ENCODE measurements at regions of chr10 and their contacts with region 1.

Region 1: GRCh38 chr10:11145495-11145855 is 127.8 kb downstream of the CELF2 start:
- DNase-seq: peak in 34 of 35 experiments; percentile 54 to 86 (median 72)
- ATAC-seq: peak; percentile 74 to 86 (median 82)
- H3K4me3 ChIP-seq: peak overlapping the region in 1 of 2 donors; percentile 54
- H3K4me3 Mint-ChIP-seq: peak overlapping the region; percentile 59 to 75 (median 71)
- H3K27ac ChIP-seq: peak overlapping the region; percentile 96
- H3K27ac Mint-ChIP-seq: peak overlapping the region; percentile 96 to 98
- H3K4me1 ChIP-seq: peaks cover 91 to 93% of the 10 kb centered on the region in 2 experiments
- H3K4me1 Mint-ChIP-seq: peaks cover 98 to 100% (median 98%) of the 10 kb centered on the region in 3 donors
- H3K27me3 ChIP-seq: no peaks in the 10 kb centered on the region
- H3K27me3 Mint-ChIP-seq: no peaks in the 10 kb centered on the region

Region 2: DNA sequence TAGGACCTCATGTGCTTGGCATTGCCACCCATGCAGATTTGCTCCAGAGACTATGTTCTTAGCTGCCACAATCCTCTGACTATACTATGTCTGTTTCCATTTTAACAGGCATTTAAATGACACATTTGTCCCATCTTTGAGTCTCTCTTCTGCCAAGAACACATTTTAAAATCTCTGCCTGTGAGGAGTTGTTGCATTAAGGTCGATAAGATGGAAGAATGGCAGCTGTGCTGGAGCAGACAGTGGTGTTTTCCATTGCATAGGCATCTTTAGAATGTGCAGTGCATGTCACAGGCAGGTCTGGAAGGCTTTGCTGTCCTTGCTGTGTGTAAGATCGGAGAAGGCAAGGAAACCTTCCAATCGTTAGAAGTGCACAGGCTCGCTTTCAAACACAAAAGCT is 198.7 kb before region 1 on chr10:
- CTCF ChIA-PET with region 1: no interaction called
- POLR2A ChIA-PET with region 1: no interaction called
- DNase-seq: no peak
- ATAC-seq: no peak
- H3K4me3 ChIP-seq: no peak overlapping the region
- H3K4me3 Mint-ChIP-seq: no peak overlapping the region
- H3K27ac ChIP-seq: no peak overlapping the region
- H3K27ac Mint-ChIP-seq: no peak overlapping the region
- H3K4me1 ChIP-seq: no peaks in the 10 kb centered on the region
- H3K4me1 Mint-ChIP-seq: no peaks in the 10 kb centered on the region
- H3K27me3 ChIP-seq: peaks cover 0 to 21% of the 10 kb centered on the region in 2 experiments
- H3K27me3 Mint-ChIP-seq: peaks cover 19 to 34% of the 10 kb centered on the region in 2 donors

Region 3: DNA sequence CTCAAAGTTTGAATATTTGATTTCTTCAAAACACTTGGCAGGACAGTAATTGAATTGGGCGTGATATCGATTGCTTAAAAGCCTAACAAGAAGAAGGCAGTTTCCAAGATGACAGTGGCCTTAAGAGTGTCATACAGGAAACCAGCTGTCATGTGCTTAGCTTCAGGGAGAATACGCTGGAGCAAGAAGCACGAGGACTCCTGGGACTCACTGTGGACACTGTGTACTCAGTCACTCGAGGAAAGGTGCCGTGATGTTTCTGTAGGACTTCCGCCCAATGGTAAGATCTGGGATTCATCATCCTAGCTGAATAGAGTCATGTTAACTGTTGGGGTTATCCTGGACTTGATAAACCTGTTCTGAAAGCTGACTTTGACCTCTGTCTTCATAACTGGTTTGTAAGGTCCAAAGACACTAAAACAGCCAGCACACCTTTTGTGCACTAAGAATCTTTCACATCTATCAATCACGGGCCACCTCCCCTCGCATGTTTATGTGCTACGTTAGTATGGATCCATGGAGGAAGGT is 14.3 kb before region 1 on chr10:
- CTCF ChIA-PET with region 1: no interaction called
- POLR2A ChIA-PET with region 1: interaction called, 7 to 12 read pairs
- DNase-seq: no peak
- ATAC-seq: no peak
- H3K4me3 ChIP-seq: no peak overlapping the region
- H3K4me3 Mint-ChIP-seq: no peak overlapping the region
- H3K27ac ChIP-seq: no peak overlapping the region
- H3K27ac Mint-ChIP-seq: no peak overlapping the region
- H3K4me1 ChIP-seq: peaks cover 0 to 6% of the 10 kb centered on the region in 2 experiments
- H3K4me1 Mint-ChIP-seq: peaks cover 15 to 31% (median 24%) of the 10 kb centered on the region in 3 donors
- H3K27me3 ChIP-seq: no peaks in the 10 kb centered on the region
- H3K27me3 Mint-ChIP-seq: no peaks in the 10 kb centered on the region

Region 4: DNA sequence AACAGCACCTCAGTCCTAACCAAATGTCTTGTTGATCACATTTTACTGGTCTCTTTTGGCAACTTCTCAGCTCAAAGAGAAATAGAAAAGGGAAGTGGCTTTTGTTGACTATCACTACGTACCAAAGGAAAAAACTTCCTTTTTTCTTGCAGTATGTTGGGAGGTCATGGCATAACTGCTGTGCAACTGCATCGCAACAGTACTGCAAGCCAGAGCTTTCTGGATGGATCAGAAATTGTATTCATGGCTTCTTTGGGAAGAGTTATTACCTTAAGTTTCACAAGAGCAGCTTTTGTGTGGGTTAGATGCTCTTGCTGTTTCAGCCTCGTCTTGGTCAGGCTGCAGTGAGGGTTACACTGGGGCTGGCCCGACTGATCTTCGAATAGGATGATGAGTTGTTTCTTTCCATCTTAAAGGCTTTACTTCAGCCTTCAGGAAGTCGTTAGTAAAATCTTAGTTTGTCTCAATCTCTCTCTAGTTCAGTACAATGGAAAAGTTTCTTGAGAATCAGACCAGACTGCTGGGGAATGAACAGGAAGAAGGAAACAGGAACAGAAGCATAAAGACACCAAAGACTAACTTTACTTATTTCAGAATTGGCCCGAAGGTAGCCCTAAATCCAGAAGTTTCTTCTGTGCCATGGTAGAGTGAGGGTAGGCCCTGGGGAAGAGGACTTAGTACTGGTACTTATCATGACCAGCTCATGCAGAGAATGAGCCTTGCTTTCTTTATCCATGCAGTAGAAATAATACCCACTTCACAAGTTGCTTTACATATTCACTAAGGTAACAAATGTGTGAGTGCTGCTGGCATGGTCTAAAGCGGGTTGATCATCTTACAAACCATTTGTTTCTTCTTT is 25.7 kb after region 1 on chr10:
- CTCF ChIA-PET with region 1: interaction called in 1 of 2 experiments, 95 read pairs
- POLR2A ChIA-PET with region 1: interaction called, 57 to 417 read pairs
- DNase-seq: peak in 2 of 35 experiments; percentile 26 to 37
- ATAC-seq: peak in 1 of 4 experiments; percentile 7
- H3K4me3 ChIP-seq: peak overlapping the region; percentile 86 to 96
- H3K4me3 Mint-ChIP-seq: no peak overlapping the region
- H3K27ac ChIP-seq: peak overlapping the region; percentile 94
- H3K27ac Mint-ChIP-seq: no peak overlapping the region
- H3K4me1 ChIP-seq: peaks cover 63 to 73% of the 10 kb centered on the region in 2 experiments
- H3K4me1 Mint-ChIP-seq: peaks cover 4 to 7% (median 6%) of the 10 kb centered on the region in 3 donors
- H3K27me3 ChIP-seq: no peaks in the 10 kb centered on the region
- H3K27me3 Mint-ChIP-seq: no peaks in the 10 kb centered on the region

Region 5: GRCh38 chr10:11178606-11179515 is 33.4 kb after region 1 on chr10:
- CTCF ChIA-PET with region 1: interaction called, 6 to 10 read pairs
- POLR2A ChIA-PET with region 1: interaction called, 5 to 417 read pairs
- DNase-seq: peak; percentile 52 to 92 (median 81)
- ATAC-seq: peak; percentile 86 to 89 (median 88)
- H3K4me3 ChIP-seq: peak overlapping the region; percentile 31 to 58
- H3K4me3 Mint-ChIP-seq: peak overlapping the region in 1 of 3 donors; percentile 71
- H3K27ac ChIP-seq: peak overlapping the region; percentile 94
- H3K27ac Mint-ChIP-seq: peak overlapping the region in 1 of 2 donors; percentile 94
- H3K4me1 ChIP-seq: peaks cover 78 to 84% of the 10 kb centered on the region in 2 experiments
- H3K4me1 Mint-ChIP-seq: peaks cover 30 to 31% (median 31%) of the 10 kb centered on the region in 3 donors
- H3K27me3 ChIP-seq: no peaks in the 10 kb centered on the region
- H3K27me3 Mint-ChIP-seq: no peaks in the 10 kb centered on the region

Region 6: DNA sequence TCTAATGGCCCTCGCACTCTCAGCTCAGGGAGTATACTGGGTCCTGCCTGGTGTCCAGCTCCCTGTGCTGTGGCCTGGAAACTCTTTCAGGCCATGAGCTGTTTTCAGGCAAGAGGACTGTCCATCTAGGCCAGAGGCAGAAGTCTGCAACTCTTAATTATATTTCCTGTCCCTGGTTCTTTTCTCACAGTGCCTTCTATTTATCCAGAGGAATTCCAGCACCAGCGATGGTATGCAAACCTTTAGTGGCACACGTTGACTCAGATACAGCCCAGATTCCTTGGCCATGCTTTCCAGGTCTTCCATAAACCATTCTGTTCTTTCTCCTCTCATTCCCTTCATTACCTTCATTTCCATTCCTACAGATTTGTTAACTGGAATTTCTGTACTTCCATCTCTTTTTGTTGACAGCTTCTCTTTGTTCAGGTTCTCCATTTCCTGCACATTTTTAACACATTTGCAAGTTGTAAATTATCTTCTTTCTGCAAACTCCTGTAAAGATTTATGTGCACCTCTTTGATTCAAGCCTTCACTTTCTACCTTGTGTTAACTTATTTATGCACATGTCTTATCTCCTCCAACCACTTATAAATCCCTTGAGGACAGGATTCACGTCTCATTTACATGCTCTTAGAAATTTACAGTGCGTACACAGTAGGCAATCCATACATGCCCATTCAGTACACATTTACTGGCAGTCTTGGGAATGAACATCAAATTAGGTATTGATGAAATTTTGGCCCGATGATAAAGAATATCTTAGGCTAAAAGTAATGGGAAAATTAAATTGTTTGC is 44.3 kb after region 1 on chr10:
- CTCF ChIA-PET with region 1: interaction called in 1 of 2 experiments, 10 read pairs
- POLR2A ChIA-PET with region 1: interaction called, 3 read pairs
- DNase-seq: no peak
- ATAC-seq: no peak
- H3K4me3 ChIP-seq: peak overlapping the region in 1 of 2 donors; percentile 27
- H3K4me3 Mint-ChIP-seq: peak overlapping the region; percentile 4 to 61 (median 40)
- H3K27ac ChIP-seq: peak overlapping the region; percentile 53
- H3K27ac Mint-ChIP-seq: peak overlapping the region; percentile 42 to 77
- H3K4me1 ChIP-seq: peaks cover 28 to 60% of the 10 kb centered on the region in 2 experiments
- H3K4me1 Mint-ChIP-seq: peaks cover 92 to 98% (median 95%) of the 10 kb centered on the region in 3 donors
- H3K27me3 ChIP-seq: no peaks in the 10 kb centered on the region
- H3K27me3 Mint-ChIP-seq: no peaks in the 10 kb centered on the region

Region 7: GRCh38 chr10:11242443-11243387 is 97.2 kb after region 1 on chr10:
- CTCF ChIA-PET with region 1: interaction called, 3 to 16 read pairs
- POLR2A ChIA-PET with region 1: no interaction called
- DNase-seq: peak in 1 of 35 experiments; percentile 20
- ATAC-seq: peak in 2 of 4 experiments; percentile 11 to 23
- H3K4me3 ChIP-seq: no peak overlapping the region
- H3K4me3 Mint-ChIP-seq: peak overlapping the region in 1 of 3 donors; percentile 22
- H3K27ac ChIP-seq: peak overlapping the region; percentile 59
- H3K27ac Mint-ChIP-seq: peak overlapping the region; percentile 78 to 83
- H3K4me1 ChIP-seq: peaks cover 21 to 80% of the 10 kb centered on the region in 2 experiments
- H3K4me1 Mint-ChIP-seq: peaks cover 8 to 62% (median 61%) of the 10 kb centered on the region in 3 donors
- H3K27me3 ChIP-seq: no peaks in the 10 kb centered on the region
- H3K27me3 Mint-ChIP-seq: no peaks in the 10 kb centered on the region